A549 (cell line): ENCODE measurements at regions of chr1 and their contacts with region 1.

Region 1: GRCh38 chr1:225772323-225772768 is 5.3 kb upstream of the SRP9 start:
- DNase-seq: peak; percentile 87 to 90
- ATAC-seq: peak; percentile 93 to 97
- H3K4me3 ChIP-seq: no peak overlapping the region
- H3K27ac ChIP-seq: peak overlapping the region; percentile 83 to 86
- H3K4me1 ChIP-seq: peaks cover 51% of the 10 kb centered on the region
- CTCF ChIP-seq: peak; percentile 95
- EP300 ChIP-seq: no peak
- POLR2A ChIP-seq: no peak
- RAD21 ChIP-seq: peak; percentile 99

Region 2: GRCh38 chr1:225554216-225554812 is 218.0 kb before region 1 on chr1:
- CTCF ChIA-PET with region 1: interaction called, 86 read pairs
- POLR2A ChIA-PET with region 1: interaction called, 3 read pairs
- DNase-seq: peak; percentile 18 to 32
- ATAC-seq: peak in 1 of 2 experiments; percentile 79; a peak in 4 of 6 replicates
- H3K4me3 ChIP-seq: no peak overlapping the region
- H3K27ac ChIP-seq: no peak overlapping the region
- H3K4me1 ChIP-seq: no peaks in the 10 kb centered on the region
- CTCF ChIP-seq: peak; percentile 77
- EP300 ChIP-seq: no peak
- POLR2A ChIP-seq: no peak
- RAD21 ChIP-seq: peak; percentile 68 to 76

Region 3: GRCh38 chr1:225595974-225596551 is 176.3 kb before region 1 on chr1:
- CTCF ChIA-PET with region 1: interaction called, 10 read pairs
- POLR2A ChIA-PET with region 1: no interaction called
- DNase-seq: no peak
- ATAC-seq: no peak
- H3K4me3 ChIP-seq: no peak overlapping the region
- H3K27ac ChIP-seq: no peak overlapping the region
- H3K4me1 ChIP-seq: peaks cover 43% of the 10 kb centered on the region
- CTCF ChIP-seq: no peak
- EP300 ChIP-seq: no peak
- POLR2A ChIP-seq: no peak
- RAD21 ChIP-seq: no peak

Region 4: GRCh38 chr1:225700164-225700740 is 72.1 kb before region 1 on chr1:
- CTCF ChIA-PET with region 1: interaction called, 37 read pairs
- POLR2A ChIA-PET with region 1: interaction called, 8 read pairs
- DNase-seq: peak; percentile 89 to 97
- ATAC-seq: peak; percentile 96 to 98
- H3K4me3 ChIP-seq: no peak overlapping the region
- H3K27ac ChIP-seq: peak overlapping the region; percentile 84 to 93
- H3K4me1 ChIP-seq: peaks cover 35% of the 10 kb centered on the region
- CTCF ChIP-seq: no peak
- EP300 ChIP-seq: peak; percentile 86 to 89; a peak in 2 of 5 replicates
- POLR2A ChIP-seq: no peak
- RAD21 ChIP-seq: peak; percentile 19 to 58; a peak in 3 of 5 replicates

Region 5: GRCh38 chr1:225746361-225747179 is 25.8 kb before region 1 on chr1:
- CTCF ChIA-PET with region 1: interaction called, 16 read pairs
- POLR2A ChIA-PET with region 1: interaction called, 8 read pairs
- DNase-seq: peak; percentile 88 to 89
- ATAC-seq: peak; percentile 98 to 99
- H3K4me3 ChIP-seq: peak overlapping the region; percentile 35
- H3K27ac ChIP-seq: peak overlapping the region; percentile 90 to 92
- H3K4me1 ChIP-seq: peaks cover 28% of the 10 kb centered on the region
- CTCF ChIP-seq: no peak
- EP300 ChIP-seq: no peak
- POLR2A ChIP-seq: 0 out of 2 replicates have a peak, but pooled peaks have one; percentile 5
- RAD21 ChIP-seq: peak; percentile 23 to 31; a peak in 2 of 5 replicates